ENCODE measurements at regions of chr9 and their contacts with region 1.

Region 1: DNA sequence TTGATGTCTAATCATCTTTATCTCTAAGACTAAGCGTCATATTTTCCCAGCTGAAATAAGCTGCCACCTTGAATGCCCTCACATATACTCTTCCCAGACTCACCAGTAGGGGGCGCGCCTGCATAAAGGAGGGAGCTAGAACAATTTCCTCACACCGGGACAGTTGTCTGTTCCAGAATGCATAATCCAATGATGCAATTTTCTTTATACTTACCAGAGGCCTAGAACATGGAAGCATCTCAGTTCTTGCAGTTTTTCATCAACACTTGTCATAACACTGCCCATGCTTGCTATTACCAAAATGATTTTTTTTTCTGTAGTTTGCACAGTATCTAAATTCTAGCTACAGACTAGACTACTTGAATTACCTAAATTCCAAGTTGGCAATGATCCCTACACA is 203.9 kb downstream of the FRMD3 start:
- DNase-seq: peak; percentile 5 to 75 (median 36)
- ATAC-seq: peak; percentile 81
- H3K4me3 ChIP-seq: no peak overlapping the region
- H3K4me3 Mint-ChIP-seq: no peak overlapping the region
- H3K27ac ChIP-seq: no peak overlapping the region
- H3K27ac Mint-ChIP-seq: no peak overlapping the region
- H3K4me1 ChIP-seq: no peaks in the 10 kb centered on the region
- H3K4me1 Mint-ChIP-seq: peaks cover 0 to 6% (median 0%) of the 10 kb centered on the region in 7 donors
- H3K27me3 ChIP-seq: no peaks in the 10 kb centered on the region
- H3K27me3 Mint-ChIP-seq: peaks cover 0 to 1% (median 0%) of the 10 kb centered on the region in 5 donors

Region 2: DNA sequence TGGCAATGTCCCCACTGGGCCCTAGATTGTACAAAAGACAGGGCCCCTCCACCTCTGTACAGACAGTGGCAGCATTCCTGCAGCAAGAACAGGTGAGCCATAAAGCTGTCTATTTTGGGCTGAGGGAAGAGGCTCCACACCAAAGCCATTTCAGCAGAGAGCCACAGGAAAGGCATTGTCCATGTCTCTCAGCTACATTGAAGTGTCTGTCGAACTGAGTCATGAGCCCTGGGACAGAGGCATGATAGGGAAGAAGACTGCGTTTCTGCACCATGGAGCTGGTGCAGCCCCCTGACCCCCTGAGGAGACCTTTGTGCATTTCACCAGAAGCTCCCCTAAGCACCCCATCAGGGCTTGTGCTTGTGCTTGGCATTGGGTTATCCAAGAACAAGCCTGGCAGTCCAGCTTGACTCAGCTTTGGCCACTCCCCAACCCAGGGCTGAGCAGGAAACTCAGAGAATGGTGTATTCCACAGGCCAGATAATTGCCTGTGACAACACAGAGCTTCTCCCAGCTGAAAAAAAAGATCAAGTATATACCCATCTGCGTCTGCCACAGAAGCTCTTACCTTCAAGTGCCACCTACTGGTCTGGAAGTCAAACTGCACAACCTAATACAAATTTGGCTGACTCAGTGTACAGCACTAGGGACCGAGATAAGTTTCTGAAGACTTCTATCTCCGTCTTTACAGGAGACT is 209.8 kb after region 1 on chr9:
- CTCF ChIA-PET with region 1: no interaction called
- POLR2A ChIA-PET with region 1: no interaction called
- intact Hi-C with region 1: loop called in 1 of 2 experiments (anchors 1 kb)
- DNase-seq: no peak
- ATAC-seq: peak; percentile 83
- H3K4me3 ChIP-seq: no peak overlapping the region
- H3K4me3 Mint-ChIP-seq: no peak overlapping the region
- H3K27ac ChIP-seq: no peak overlapping the region
- H3K27ac Mint-ChIP-seq: no peak overlapping the region
- H3K4me1 ChIP-seq: no peaks in the 10 kb centered on the region
- H3K4me1 Mint-ChIP-seq: peaks cover 0 to 1% (median 0%) of the 10 kb centered on the region in 7 donors
- H3K27me3 ChIP-seq: no peaks in the 10 kb centered on the region
- H3K27me3 Mint-ChIP-seq: peaks cover 7 to 37% (median 19%) of the 10 kb centered on the region in 5 donors

Region 3: DNA sequence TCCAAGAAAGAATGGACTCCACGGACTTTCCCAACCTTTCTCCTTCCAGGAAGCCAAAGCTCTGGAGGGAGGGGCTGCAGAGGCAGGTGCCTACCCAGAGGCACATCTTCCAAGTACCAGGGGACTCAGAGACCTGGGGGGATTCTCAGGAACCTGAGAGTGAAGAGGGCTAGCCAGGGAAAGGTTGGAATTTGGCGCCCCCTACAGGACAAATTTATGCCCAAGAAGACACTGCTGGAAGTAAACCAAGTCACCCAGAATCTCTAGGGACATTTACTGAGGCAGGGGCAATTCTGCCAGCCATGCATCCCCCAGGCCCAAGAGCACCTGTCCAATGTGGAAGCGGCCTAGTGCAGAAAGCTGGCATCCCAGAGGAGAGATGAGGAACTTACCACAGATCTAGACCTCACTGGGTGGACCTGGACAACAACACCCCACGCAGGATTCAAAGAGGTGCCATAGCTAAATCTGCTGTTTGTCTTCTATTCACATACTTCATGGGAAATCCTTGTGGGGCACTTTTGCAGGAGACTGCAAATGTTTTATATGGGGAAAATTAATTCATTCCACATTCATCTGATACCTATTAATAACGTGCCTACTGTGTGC is 262.7 kb after region 1 on chr9:
- CTCF ChIA-PET with region 1: no interaction called
- POLR2A ChIA-PET with region 1: no interaction called
- intact Hi-C with region 1: loop called (anchors 1 to 2 kb)
- DNase-seq: peak in 4 of 9 donors; percentile 11 to 35 (median 14)
- ATAC-seq: no peak
- H3K4me3 ChIP-seq: no peak overlapping the region
- H3K4me3 Mint-ChIP-seq: no peak overlapping the region
- H3K27ac ChIP-seq: no peak overlapping the region
- H3K27ac Mint-ChIP-seq: no peak overlapping the region
- H3K4me1 ChIP-seq: no peaks in the 10 kb centered on the region
- H3K4me1 Mint-ChIP-seq: peaks cover 0 to 2% (median 0%) of the 10 kb centered on the region in 7 donors
- H3K27me3 ChIP-seq: no peaks in the 10 kb centered on the region
- H3K27me3 Mint-ChIP-seq: no peaks in the 10 kb centered on the region

Measured in naive thymus-derived CD4-positive, alpha-beta T cell (primary cell).